PC-9 (cell line): ENCODE measurements at regions of chr5 and their contacts with region 1.

Region 1: GRCh38 chr5:10441083-10441991 is at the start of gene ROPN1L:
- DNase-seq: peak; percentile 70 to 97
- H3K4me3 ChIP-seq: peak within 1 kb of the TSS; percentile 72
- H3K27ac ChIP-seq: no peak within 1 kb of the TSS
- H3K4me1 ChIP-seq: peaks cover 17% of the 10 kb centered on the region
- H3K27me3 ChIP-seq: no peaks in the 10 kb centered on the region
- CTCF ChIP-seq: no peak
- total RNA-seq, gene ROPN1L: 7.1 and 10.3 TPM in 2 replicates

Region 2: DNA sequence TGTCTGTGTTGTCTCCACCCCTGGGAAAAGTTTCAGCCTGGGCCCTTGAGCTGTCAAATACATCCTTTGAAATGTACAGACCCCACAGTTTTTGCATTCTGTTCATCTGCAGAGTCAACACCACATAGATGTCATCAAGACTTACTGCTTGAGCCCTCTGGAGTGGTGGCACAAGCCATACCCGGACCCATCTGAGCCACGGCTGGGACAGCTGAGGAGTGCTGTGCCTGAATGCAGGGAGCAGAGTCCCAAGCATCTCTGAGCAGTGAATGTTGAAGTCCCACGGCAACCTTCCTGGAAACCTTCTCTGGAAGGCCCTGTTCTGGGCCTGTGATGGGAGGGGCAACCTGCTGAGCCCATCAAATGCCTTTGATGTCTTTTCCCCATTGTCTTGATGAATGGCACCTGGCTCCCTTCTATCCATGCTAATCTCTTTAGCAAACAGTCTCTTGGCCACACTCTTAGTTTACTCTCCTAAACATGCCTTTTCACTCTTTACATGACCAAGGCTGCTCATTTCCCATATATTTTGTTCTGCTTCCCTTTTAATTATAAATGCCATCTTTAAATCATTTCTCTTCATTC is 284.2 kb before region 1 on chr5:
- CTCF ChIA-PET with region 1: no interaction called
- POLR2A ChIA-PET with region 1: no interaction called
- intact Hi-C with region 1: loop called (anchors 10 kb)
- DNase-seq: no peak
- H3K4me3 ChIP-seq: no peak overlapping the region
- H3K27ac ChIP-seq: no peak overlapping the region
- H3K4me1 ChIP-seq: no peaks in the 10 kb centered on the region
- H3K27me3 ChIP-seq: 0 out of 2 replicates have a peak, but pooled peaks cover 7% of the 10 kb centered on the region
- CTCF ChIP-seq: no peak

Region 3: DNA sequence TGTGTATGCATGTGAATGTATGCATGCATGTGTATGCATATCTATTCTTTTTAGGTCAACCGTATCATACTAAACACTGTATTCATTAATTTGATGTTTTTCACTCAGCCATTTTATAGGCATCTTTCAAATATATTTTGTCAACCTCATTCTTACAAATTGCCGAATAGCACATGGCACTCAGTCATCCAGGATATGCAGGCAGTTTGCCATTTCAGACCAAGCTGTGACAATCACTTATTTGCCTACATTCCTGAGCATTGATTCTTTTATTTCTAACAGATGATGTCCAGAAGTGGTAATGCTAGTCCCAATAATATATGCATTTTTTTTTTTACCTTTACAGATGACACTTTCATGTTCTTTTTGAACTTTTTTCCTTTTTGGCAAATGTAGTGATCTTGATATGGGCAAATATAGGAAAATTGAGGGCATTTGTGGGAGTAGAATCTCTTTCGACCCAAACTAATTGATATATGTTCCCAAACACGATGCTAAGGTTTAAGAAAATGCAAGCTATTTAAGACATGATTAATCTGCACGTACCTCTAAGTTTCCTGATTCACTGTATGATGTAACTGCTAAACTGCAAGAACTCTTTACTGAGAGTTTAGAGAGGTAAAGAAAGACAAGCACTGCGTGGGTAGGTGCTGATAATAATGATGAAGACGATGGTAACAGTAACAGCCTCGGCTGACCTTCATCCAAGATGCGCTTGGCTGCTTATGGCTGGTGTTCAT is 473.6 kb after region 1 on chr5:
- CTCF ChIA-PET with region 1: no interaction called
- POLR2A ChIA-PET with region 1: no interaction called
- intact Hi-C with region 1: no loop called
- DNase-seq: no peak
- H3K4me3 ChIP-seq: no peak overlapping the region
- H3K27ac ChIP-seq: no peak overlapping the region
- H3K4me1 ChIP-seq: peaks cover 13% of the 10 kb centered on the region
- H3K27me3 ChIP-seq: no peaks in the 10 kb centered on the region
- CTCF ChIP-seq: no peak